ENCODE measurements at regions of chr9 and their contacts with region 1.

Region 1: GRCh38 chr9:21334701-21335632 is at the start of gene KLHL9:
- DNase-seq: peak; percentile 72 to 87 (median 85)
- ATAC-seq: peak; percentile 94
- H3K4me3 ChIP-seq: peak within 1 kb of the TSS; percentile 96
- H3K4me3 Mint-ChIP-seq: peak within 1 kb of the TSS; percentile 90 to 97 (median 94)
- H3K27ac ChIP-seq: peak within 1 kb of the TSS; percentile 95
- H3K27ac Mint-ChIP-seq: peak within 1 kb of the TSS; percentile 90 to 98 (median 95)
- H3K4me1 ChIP-seq: peaks cover 15 to 35% of the 10 kb centered on the region in 2 donors
- H3K4me1 Mint-ChIP-seq: peaks cover 36 to 65% (median 60%) of the 10 kb centered on the region in 7 donors
- H3K27me3 ChIP-seq: no peaks in the 10 kb centered on the region
- H3K27me3 Mint-ChIP-seq: peaks cover 0 to 27% (median 0%) of the 10 kb centered on the region in 5 donors
- total RNA-seq, gene KLHL9: 11.8 to 37.7 (median 19.1) TPM

Region 2: DNA sequence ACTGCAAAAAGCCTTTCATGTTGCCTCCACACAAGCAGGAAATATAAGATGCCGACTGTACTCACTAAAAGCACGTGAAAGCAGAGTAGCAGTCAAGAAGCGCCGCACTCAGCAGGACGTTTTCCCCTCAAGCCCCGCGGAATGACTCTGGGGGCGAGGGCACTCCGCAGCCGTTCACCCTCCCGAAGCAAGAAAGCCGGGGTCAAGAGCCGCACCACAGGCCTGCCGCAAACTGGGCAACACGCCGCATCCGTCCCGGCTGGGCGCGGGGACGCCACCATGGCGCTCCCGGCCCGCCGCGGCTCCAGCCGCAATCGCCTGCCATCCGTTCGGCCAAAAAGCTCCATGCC is 1955.3 kb before region 1 on chr9:
- CTCF ChIA-PET with region 1: no interaction called
- POLR2A ChIA-PET with region 1: no interaction called
- intact Hi-C with region 1: loop called in 1 of 2 experiments (anchors 1 kb)
- DNase-seq: peak in 1 of 9 donors; percentile 39
- ATAC-seq: peak; percentile 59
- H3K4me3 ChIP-seq: peak overlapping the region; percentile 89
- H3K4me3 Mint-ChIP-seq: peak overlapping the region; percentile 92 to 99 (median 98)
- H3K27ac ChIP-seq: peak overlapping the region; percentile 84
- H3K27ac Mint-ChIP-seq: peak overlapping the region; percentile 97 to 100 (median 99)
- H3K4me1 ChIP-seq: peaks cover 13 to 24% of the 10 kb centered on the region in 2 donors
- H3K4me1 Mint-ChIP-seq: peaks cover 29 to 50% (median 41%) of the 10 kb centered on the region in 7 donors
- H3K27me3 ChIP-seq: no peaks in the 10 kb centered on the region
- H3K27me3 Mint-ChIP-seq: no peaks in the 10 kb centered on the region

Region 3: DNA sequence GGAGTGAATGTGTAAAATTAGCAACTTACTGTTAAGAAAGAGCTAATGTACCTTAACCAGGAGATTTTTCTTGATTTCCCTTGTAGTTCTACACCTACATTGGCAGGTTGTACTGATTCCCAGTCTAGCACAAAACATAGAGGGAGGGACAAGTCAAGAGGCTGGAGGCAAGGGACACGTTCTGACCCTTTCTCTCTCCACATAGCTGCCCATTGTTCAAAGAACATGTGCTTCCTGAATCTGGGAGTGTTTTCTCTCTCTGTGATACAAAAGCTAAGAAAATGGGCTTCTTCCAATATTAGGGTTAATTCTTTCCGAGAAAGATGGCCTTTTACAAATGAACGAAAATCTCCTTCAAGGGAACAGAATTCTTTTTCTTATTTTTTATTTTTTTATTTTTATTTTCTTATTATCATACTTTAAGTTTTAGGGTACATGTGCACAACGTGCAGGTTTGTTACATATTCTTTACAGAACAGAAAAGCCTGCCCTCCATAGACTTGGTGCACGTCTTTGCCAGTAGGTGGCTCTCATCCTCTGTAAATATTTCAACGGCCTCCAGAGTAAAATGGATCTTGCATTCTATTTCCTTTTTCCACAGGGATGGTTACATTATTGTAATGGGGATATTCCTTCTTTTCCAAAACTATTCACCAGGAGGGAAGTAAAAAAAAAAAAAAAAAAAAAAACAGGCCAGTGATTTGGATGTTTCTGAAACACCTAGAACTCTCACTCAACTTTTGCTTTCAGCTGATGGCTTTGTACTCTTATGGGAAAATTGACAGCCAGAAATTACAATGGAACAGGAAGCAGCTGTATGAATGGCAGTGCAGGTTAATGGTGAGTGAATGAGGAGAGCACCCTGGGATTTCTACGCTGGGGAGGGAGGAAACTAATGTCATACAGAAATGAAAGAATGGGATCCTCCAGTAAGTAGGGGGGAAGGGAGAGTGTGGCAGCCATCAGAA is 16.7 kb before region 1 on chr9:
- CTCF ChIA-PET with region 1: interaction called, 9 read pairs
- POLR2A ChIA-PET with region 1: interaction called, 4 read pairs
- intact Hi-C with region 1: loop called (anchors 1 to 2 kb)
- DNase-seq: peak in 6 of 9 donors; percentile 16 to 39 (median 28)
- ATAC-seq: peak; percentile 84
- H3K4me3 ChIP-seq: no peak overlapping the region
- H3K4me3 Mint-ChIP-seq: no peak overlapping the region
- H3K27ac ChIP-seq: no peak overlapping the region
- H3K27ac Mint-ChIP-seq: peak overlapping the region in 2 of 9 donors; percentile 54
- H3K4me1 ChIP-seq: no peaks in the 10 kb centered on the region
- H3K4me1 Mint-ChIP-seq: peaks cover 4 to 6% (median 5%) of the 10 kb centered on the region in 7 donors
- H3K27me3 ChIP-seq: no peaks in the 10 kb centered on the region
- H3K27me3 Mint-ChIP-seq: peaks cover 0 to 21% (median 0%) of the 10 kb centered on the region in 5 donors

Region 4: GRCh38 chr9:21381448-21382339 is 46.7 kb after region 1 on chr9:
- CTCF ChIA-PET with region 1: interaction called, 3 read pairs
- POLR2A ChIA-PET with region 1: no interaction called
- intact Hi-C with region 1: loop called in 1 of 2 experiments (anchors 2 kb)
- DNase-seq: no peak
- ATAC-seq: peak; percentile 87
- H3K4me3 ChIP-seq: no peak overlapping the region
- H3K4me3 Mint-ChIP-seq: peak overlapping the region in 4 of 10 donors; percentile 10 to 45 (median 26)
- H3K27ac ChIP-seq: no peak overlapping the region
- H3K27ac Mint-ChIP-seq: peak overlapping the region in 1 of 9 donors; percentile 6
- H3K4me1 ChIP-seq: no peaks in the 10 kb centered on the region
- H3K4me1 Mint-ChIP-seq: peaks cover 0 to 17% (median 6%) of the 10 kb centered on the region in 7 donors
- H3K27me3 ChIP-seq: no peaks in the 10 kb centered on the region
- H3K27me3 Mint-ChIP-seq: peaks cover 26 to 65% (median 38%) of the 10 kb centered on the region in 5 donors

Region 5: DNA sequence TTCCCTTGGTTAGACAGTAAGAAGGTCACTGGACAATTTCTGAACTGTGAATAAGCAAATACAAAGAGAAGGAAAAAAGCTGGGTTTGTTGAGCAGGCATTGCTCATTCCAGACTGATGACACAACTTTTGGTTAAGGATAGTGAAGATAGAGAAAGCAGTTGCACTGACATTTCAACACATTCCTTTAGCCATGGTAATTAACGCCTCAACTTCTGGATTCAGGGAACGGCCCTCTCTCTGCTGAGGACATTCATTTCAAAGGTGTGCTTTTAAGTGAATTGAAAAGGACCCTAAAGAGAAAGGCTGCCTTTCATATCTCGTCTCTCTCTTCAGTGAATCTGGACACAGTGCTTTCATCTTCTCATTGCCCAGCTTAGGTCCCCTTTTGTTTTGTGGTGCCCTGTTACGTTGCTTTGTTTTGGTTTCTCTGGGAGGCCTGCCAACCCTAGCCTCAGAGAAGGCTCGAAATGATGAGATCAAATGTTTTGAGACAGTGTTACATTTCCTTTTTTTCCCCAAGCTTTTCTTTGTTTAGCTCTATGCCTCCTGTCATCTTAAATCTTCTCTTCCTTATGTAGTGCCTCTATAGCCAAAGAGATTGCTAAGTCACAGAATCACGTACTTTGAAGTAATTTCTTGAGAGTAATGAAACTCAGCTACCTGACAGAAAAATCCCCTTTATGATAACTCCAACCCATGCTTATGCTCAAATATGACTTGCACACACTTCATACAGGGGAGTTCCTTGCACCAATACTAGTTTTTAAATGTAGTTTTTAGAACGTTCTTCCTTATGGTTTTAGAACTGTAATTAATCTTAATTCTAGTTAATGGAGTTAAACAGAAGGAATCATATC is 241.6 kb after region 1 on chr9:
- CTCF ChIA-PET with region 1: no interaction called
- POLR2A ChIA-PET with region 1: interaction called, 4 read pairs
- intact Hi-C with region 1: loop called (anchors 5 kb)
- DNase-seq: peak in 7 of 9 donors; percentile 44 to 80 (median 60)
- ATAC-seq: peak; percentile 69
- H3K4me3 ChIP-seq: no peak overlapping the region
- H3K4me3 Mint-ChIP-seq: peak overlapping the region; percentile 3 to 77 (median 58)
- H3K27ac ChIP-seq: peak overlapping the region; percentile 48
- H3K27ac Mint-ChIP-seq: peak overlapping the region; percentile 34 to 95 (median 87)
- H3K4me1 ChIP-seq: peaks cover 25 to 33% of the 10 kb centered on the region in 2 donors
- H3K4me1 Mint-ChIP-seq: peaks cover 23 to 51% (median 39%) of the 10 kb centered on the region in 7 donors
- H3K27me3 ChIP-seq: no peaks in the 10 kb centered on the region
- H3K27me3 Mint-ChIP-seq: peaks cover 0 to 34% (median 0%) of the 10 kb centered on the region in 5 donors